BJ (cell line): ENCODE measurements at regions of chr1 and their contacts with region 1.

Region 1: GRCh38 chr1:200741551-200742207 is 3.0 kb downstream of the CAMSAP2 start:
- DNase-seq: no peak
- H3K4me3 ChIP-seq: peak overlapping the region; percentile 84
- H3K27me3 ChIP-seq: no peaks in the 10 kb centered on the region
- CTCF ChIP-seq: no peak

Region 2: GRCh38 chr1:200845360-200845759 is 103.7 kb after region 1 on chr1:
- CTCF ChIA-PET with region 1: no interaction called
- POLR2A ChIA-PET with region 1: interaction called, 15 read pairs
- DNase-seq: no peak
- H3K4me3 ChIP-seq: no peak overlapping the region
- H3K27me3 ChIP-seq: no peaks in the 10 kb centered on the region
- CTCF ChIP-seq: no peak